ENCODE measurements at regions of chr11 and their contacts with region 1.

Region 1: DNA sequence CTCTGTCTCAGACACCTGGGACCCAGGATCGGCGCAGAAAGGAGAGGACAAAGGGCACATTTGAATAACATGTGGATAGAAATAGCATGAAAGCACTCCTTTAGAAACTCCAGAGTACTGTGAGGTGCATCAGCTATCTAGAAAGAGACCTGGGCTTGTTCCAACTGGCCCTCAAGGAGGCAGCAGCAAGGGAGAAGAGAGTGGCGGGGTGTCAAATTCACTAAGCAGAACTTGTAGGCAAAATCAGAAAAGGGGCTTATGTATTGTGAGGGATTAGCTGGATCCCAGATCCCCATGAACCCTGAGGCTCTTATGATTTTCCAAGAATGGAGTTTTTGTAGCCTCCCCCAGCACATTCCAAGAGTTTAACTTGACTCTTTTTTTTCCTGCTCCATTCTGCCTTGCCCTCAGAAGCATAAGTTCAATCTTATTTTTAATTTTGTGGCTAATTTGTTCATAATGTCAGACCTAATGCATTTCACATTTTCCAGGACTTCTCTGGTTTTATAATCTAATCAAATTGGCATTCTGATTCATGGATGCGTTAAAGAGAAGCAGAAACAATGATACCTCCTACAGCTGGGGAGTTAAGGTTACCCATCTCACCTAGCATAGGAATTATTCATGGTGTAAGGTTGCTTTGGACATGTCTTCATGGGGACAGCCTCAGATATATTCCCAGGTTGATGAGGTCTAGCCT is 33.6 kb downstream of the USH1C start:
- DNase-seq: no peak

Region 2: DNA sequence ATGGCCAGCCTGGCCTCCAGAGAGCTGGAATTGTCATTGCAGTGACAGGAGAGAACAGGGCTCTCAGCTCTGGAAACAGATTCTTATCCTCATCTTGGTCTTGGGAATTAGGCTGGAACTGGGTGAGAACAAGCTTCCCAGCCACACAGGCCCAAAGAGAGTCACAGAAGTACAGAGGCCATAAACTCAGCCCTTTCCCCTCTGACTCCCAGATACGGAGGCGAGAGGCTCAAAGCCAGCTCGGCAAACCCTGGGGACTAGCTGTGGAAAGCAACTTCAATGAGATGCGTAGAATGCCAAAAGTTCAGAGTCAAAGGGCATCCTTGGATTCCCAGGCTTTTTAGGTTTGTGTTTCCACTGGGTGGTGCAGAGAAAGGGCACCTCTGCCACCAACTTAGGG is 19.7 kb before region 1 on chr11:
- intact Hi-C with region 1: loop called in 1 of 2 experiments (anchors 1 kb)
- DNase-seq: no peak